ENCODE measurements at regions of chr6 and their contacts with region 1.

Region 1: DNA sequence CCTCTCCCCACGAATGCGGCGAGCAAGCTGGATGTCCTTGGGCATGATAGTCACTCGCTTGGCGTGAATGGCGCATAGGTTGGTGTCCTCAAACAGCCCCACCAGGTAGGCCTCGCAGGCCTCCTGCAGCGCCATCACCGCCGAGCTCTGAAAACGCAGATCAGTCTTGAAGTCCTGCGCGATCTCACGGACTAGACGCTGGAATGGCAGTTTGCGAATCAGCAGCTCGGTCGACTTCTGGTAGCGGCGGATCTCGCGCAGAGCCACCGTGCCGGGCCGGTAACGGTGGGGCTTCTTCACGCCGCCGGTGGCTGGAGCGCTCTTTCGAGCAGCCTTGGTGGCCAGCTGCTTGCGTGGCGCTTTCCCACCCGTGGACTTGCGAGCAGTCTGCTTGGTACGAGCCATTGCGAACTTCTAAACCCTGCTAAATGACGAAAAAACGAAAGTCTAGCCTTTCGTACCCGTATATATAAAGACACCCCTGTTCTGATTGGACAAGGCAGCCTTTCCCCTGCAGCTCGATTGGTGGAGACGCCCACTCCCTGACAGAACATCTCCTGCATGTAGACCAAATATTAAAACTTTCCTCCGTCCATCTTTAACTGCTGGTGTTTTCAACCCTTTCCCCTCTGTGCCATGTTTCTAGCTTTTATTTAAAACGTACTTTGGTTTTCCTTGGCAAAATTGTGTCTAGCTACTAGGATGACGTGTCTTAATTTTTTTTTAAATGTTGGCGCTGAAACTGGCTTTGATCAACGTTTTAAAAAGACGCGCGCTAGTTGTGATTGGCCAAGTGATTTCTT is 109.8 kb downstream of the HFE start:
- DNase-seq: peak; percentile 55 to 95 (median 86)
- ATAC-seq: peak; percentile 57 to 62
- H3K4me3 Mint-ChIP-seq: peak overlapping the region; percentile 88 to 99 (median 96)
- H3K27ac Mint-ChIP-seq: peak overlapping the region; percentile 94 to 99 (median 98)
- H3K4me1 Mint-ChIP-seq: peaks cover 25 to 46% (median 42%) of the 10 kb centered on the region in 4 donors
- H3K27me3 Mint-ChIP-seq: no peaks in the 10 kb centered on the region

Region 2: GRCh38 chr6:26025894-26026832 is 170.9 kb before region 1 on chr6:
- POLR2A ChIA-PET with region 1: interaction called, 56 read pairs
- DNase-seq: peak; percentile 83 to 98 (median 94)
- ATAC-seq: peak; percentile 45 to 47
- H3K4me3 Mint-ChIP-seq: peak overlapping the region; percentile 84 to 99 (median 92)
- H3K27ac Mint-ChIP-seq: peak overlapping the region; percentile 96 to 100 (median 99)
- H3K4me1 Mint-ChIP-seq: peaks cover 19 to 47% (median 38%) of the 10 kb centered on the region in 4 donors
- H3K27me3 Mint-ChIP-seq: peaks cover 0 to 2% (median 0%) of the 10 kb centered on the region in 5 donors

Region 3: GRCh38 chr6:26103770-26104456 is 93.1 kb before region 1 on chr6:
- POLR2A ChIA-PET with region 1: interaction called, 13 read pairs
- DNase-seq: peak; percentile 71 to 97 (median 94)
- ATAC-seq: peak; percentile 91 to 92
- H3K4me3 Mint-ChIP-seq: peak overlapping the region; percentile 87 to 93 (median 89)
- H3K27ac Mint-ChIP-seq: peak overlapping the region; percentile 96 to 100 (median 98)
- H3K4me1 Mint-ChIP-seq: peaks cover 10 to 20% (median 14%) of the 10 kb centered on the region in 4 donors
- H3K27me3 Mint-ChIP-seq: peaks cover 0 to 4% (median 0%) of the 10 kb centered on the region in 5 donors

Region 4: DNA sequence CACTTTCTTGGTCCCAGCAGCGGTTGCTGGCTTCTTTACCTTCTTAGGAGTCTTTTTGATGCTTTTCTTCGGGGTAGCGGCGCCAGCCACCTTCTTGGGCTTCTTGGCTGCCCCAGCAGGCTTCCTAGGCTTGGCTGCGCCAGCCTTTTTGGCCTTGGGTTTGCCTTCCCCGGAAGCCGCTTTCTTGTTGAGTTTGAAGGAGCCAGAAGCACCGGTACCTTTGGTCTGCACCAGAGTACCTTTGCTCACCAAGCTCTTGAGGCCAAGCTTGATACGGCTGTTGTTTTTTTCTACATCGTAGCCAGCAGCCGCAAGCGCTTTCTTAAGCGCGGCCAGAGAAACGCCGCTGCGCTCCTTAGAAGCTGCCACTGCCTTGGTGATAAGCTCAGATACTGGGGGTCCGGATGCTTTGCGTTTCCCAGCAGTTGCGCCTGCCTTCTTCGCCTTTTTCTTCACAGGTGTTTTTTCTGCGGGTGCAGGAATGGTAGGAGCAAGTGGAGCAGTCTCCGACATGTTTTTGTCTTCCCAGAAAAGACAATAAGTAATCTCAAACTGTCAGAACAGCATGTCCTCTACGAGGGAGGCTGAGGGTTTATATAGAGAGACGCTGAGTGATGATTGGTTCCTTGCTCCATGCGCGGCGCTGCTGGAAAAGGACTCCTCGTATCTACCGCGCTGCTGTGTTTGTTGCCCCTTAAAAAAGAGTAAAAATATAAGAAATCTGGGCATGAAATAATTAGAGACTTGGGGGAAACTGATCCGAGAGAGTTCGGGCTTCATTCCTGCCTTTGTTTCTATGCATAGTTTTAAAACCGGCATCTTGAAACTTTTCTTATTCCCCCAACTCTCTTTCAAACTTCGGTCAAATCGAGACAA is 37.6 kb after region 1 on chr6:
- POLR2A ChIA-PET with region 1: interaction called, 360 read pairs
- DNase-seq: peak; percentile 41 to 91 (median 86)
- ATAC-seq: peak; percentile 69
- H3K4me3 Mint-ChIP-seq: peak overlapping the region; percentile 91 to 99 (median 95)
- H3K27ac Mint-ChIP-seq: peak overlapping the region; percentile 95 to 100 (median 97)
- H3K4me1 Mint-ChIP-seq: peaks cover 12 to 37% (median 32%) of the 10 kb centered on the region in 4 donors
- H3K27me3 Mint-ChIP-seq: no peaks in the 10 kb centered on the region

Region 5: GRCh38 chr6:26568601-26569432 is 371.8 kb after region 1 on chr6:
- POLR2A ChIA-PET with region 1: interaction called, 10 read pairs
- DNase-seq: peak; percentile 93 to 99 (median 99)
- ATAC-seq: peak; percentile 80 to 82
- H3K4me3 Mint-ChIP-seq: peak overlapping the region; percentile 91 to 100 (median 95)
- H3K27ac Mint-ChIP-seq: peak overlapping the region; percentile 92 to 100 (median 98)
- H3K4me1 Mint-ChIP-seq: peaks cover 15 to 33% (median 30%) of the 10 kb centered on the region in 4 donors
- H3K27me3 Mint-ChIP-seq: peaks cover 0 to 4% (median 0%) of the 10 kb centered on the region in 5 donors

Region 6: DNA sequence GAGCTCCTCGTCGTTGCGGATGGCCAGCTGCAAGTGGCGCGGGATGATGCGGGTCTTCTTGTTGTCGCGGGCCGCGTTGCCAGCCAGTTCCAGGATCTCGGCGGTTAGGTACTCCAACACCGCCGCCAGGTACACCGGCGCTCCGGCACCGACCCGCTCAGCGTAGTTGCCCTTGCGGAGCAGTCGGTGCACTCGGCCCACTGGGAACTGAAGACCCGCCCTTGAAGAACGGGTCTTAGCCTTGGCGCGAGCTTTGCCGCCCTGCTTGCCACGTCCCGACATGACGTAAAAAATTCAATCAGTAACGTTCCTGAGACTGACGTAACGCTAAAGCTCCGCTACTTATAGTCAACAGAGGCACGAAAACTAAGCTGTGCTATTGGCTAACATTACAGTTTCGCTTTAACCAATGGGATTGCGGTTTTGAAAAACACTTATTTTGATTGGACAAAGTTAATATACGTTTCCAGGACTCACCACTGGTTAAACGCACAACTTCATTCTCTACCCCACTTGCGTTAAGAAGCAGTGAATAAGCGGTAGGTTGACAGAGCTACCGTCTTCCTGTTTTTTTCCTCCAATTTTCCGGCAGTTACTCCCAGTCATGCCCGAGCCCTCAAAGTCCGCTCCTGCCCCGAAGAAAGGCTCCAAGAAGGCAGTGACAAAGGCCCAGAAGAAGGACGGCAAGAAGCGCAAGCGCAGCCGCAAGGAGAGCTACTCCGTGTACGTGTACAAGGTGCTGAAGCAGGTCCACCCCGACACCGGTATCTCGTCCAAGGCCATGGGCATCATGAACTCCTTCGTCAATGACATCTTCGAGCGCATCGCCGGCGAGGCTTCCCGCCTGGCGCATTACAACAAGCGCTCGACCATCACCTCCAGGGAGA is 1641.3 kb after region 1 on chr6:
- POLR2A ChIA-PET with region 1: interaction called, 56 read pairs
- DNase-seq: peak; percentile 63 to 95 (median 88)
- ATAC-seq: peak; percentile 78 to 81
- H3K4me3 Mint-ChIP-seq: no peak overlapping the region
- H3K27ac Mint-ChIP-seq: no peak overlapping the region
- H3K4me1 Mint-ChIP-seq: peaks cover 8 to 36% (median 18%) of the 10 kb centered on the region in 4 donors
- H3K27me3 Mint-ChIP-seq: peaks cover 0 to 8% (median 0%) of the 10 kb centered on the region in 5 donors